Mucosa of descending colon (tissue), 3 donors: ENCODE measurements at regions of chr2 and their contacts with region 1.

Region 1: DNA sequence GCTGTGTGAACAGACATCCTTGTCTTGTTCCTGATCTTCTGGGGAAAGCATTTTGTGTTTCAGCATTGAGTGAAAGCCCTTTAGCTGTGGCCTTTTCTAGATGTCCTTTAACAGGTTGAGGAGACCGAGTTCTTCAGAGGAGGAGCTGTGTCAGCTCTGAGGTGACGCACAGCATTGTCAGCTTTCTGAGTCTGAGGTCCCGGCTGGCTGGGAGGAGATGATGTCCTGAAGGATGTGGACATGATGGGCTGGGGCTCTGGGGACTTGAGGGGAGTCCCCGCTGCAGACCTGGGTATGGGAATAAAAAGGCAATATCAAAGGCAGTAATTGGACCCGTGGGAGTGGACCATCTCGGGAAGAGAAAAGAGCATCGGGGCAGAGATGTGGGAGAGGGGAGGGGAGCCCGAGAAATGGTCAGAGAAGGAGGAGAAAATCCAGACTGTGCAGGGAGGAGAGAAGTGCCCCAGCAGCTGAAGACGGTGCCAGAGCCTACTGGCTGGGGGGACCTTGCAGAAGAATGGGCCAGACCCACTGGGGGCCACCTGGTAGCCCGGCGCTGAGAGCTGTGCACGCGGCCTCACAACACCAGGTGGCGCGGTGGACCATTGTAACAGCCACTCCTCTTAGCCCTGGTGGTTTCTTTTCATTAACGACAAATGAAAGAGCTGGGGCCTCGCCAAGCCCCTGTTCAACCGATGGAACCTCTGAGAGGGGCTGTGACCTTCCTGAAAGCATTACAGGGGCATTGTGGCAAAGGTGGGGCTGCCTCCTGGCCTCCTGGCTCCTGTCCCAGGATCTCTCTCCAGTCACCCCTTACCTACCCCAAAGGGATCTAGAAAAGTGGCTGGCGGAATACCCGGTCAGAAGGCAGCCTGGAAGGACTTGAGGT is 61.6 kb downstream of the ST3GAL5 start:
- DNase-seq: peak; percentile 69 to 86 (median 80)
- ATAC-seq: peak; percentile 95
- H3K4me3 ChIP-seq: no peak overlapping the region
- H3K4me1 ChIP-seq: no peaks in the 10 kb centered on the region
- CTCF ChIP-seq: peak; percentile 70

Region 2: DNA sequence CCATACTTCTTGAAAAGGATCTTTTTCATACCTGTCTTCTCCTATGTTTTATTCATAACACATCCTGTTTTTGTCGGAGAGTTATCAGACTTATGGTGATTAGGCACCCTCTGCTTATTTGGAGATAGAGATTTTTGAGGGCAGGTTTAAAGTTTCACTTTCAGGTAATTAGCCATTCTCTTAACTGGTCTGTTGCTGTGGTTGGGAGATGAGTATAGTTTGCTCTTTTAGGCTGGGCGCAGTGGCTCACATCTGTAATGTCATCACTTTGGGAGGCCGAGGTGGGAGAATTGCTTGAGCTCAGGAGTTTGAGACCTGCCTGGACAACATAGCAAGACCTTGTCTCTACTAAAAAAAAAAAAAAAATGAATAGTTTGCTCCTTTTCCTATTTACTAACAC is 184.5 kb before region 1 on chr2:
- intact Hi-C with region 1: no loop called
- DNase-seq: no peak
- ATAC-seq: no peak
- H3K4me3 ChIP-seq: no peak overlapping the region
- H3K4me1 ChIP-seq: no peaks in the 10 kb centered on the region
- CTCF ChIP-seq: no peak

Region 3: DNA sequence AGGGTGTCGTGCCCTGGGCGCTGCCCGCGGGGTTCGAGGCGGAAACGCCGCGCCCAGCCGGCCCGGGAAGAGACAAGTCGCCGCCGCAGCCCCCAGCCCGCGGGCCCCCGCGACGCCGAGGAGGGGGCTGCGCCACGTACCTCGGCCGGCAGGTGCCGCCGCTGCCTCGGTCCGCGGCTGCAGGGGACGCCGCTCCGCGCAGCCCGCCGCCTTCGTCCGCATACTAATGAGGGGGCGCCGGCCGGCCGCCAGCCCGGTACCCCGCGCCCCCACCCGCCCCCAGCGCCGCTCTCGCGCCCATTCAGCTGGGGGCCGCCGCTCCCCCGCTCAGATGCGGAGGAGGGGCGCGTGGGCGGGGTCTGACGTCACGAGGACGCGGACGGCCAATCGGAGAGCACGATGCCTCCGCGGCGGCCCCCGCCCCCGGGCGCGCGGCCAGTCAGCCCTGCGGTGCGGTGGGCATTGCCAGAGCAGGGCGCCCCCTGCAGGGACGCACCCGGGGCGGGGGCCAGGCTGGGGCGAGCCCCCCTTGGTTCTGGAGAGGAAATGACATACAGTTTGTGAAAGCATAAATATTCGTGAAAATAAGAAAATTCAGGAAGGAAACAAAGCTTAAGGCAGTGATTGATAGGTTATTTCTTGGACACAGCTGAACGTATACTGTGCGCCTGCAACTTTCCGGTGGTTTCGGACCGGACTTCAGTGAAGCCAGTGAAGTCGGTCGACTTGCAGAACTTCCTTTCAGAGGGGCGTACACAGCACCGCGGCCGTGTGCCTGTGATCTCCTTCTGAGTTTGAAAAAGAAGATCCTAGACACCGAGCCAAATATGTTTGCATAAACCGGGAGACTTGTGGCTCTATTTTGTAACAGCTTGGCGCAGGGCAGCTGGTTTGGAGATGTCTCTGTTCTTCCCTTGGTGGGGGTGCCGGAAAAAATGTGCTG is 61.7 kb after region 1 on chr2 and contains the start of gene ST3GAL5:
- intact Hi-C with region 1: loop called in 1 of 2 experiments (anchors 5 kb)
- DNase-seq: peak; percentile 92 to 94 (median 92)
- ATAC-seq: peak; percentile 91
- H3K4me3 ChIP-seq: peak within 1 kb of the TSS; percentile 50
- H3K4me1 ChIP-seq: peaks cover 12% of the 10 kb centered on the region
- CTCF ChIP-seq: peak; percentile 20
- total RNA-seq, gene ST3GAL5: 5.0 to 19.0 (median 5.4) TPM

Region 4: DNA sequence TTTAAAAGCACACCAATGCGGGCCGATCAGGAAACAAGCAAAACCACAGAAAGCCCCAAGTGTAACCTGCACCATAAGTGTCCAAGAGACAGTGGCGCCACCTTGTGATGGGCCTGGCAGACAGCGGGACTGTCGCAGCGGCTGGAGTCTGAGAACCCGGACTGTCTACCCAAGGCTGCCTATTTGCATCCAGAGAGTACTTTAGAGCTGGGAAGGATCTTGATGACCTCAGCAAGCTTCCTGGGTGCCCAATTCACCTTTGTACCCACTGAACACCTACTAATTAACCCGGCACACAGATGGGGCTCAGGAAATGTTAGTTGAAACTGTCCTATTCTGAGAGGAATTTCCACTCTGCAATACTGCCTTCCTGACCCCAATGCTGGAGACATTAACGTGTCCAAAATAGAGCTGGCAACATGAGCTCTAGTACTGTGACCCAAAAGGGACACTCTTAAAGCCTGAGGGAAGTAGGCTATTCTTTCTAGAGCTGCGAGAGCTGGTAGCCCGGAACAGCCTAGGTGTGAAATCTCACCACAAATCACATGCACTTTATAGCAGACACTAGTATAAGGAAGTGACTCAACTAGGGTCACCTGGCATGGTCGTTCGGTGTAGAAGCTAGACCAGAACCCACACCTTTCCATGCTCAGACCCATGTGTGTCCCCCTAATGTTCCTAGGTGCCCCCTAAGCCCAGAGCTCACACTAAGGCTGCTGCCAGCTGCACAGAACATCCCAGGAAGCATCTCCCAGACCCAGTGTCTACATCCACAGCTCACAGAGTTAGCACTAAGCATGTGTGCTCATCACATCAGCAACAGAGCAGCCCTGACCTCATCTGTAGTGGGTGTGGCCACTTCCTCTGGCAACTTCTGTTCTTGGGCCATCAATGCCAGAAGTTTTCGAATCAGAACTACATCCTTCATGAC is 253.0 kb after region 1 on chr2:
- intact Hi-C with region 1: loop called (anchors 2 to 5 kb)
- DNase-seq: peak; percentile 87 to 93 (median 92)
- ATAC-seq: peak; percentile 96
- H3K4me3 ChIP-seq: no peak overlapping the region
- H3K4me1 ChIP-seq: peaks cover 9% of the 10 kb centered on the region
- CTCF ChIP-seq: peak; percentile 69

Region 5: DNA sequence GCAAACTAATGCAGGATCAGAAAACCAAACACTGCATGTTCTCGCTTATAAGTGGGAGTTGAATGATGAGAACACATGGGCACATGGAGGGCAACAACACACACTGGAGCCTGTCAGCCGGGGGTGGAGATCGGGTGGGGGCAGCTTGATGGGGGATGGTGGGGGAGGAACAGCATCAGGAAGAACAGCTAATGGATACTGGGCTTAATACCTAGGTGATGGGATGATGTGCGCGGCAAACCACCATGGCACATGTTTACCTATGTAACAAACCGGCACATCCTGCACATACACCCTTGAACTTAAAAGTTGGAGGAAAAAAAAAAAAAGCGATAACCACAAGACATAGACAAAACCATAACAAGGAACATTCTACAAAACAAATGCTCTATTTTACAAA is 725.7 kb after region 1 on chr2:
- intact Hi-C with region 1: no loop called
- DNase-seq: peak in 1 of 3 donors; percentile 34
- ATAC-seq: no peak
- H3K4me3 ChIP-seq: no peak overlapping the region
- H3K4me1 ChIP-seq: no peaks in the 10 kb centered on the region
- CTCF ChIP-seq: no peak